Activated naive CD4-positive, alpha-beta T cell treated with anti-CD3 and anti-CD28 coated beads for 36 hours (primary cell): ENCODE measurements at regions of chr2 and their contacts with region 1.

Region 1: GRCh38 chr2:213119061-213119856 is 32.2 kb downstream of the IKZF2 start:
- DNase-seq: peak; percentile 6
- H3K4me3 Mint-ChIP-seq: no peak overlapping the region
- H3K27ac Mint-ChIP-seq: peak overlapping the region; percentile 23
- H3K4me1 Mint-ChIP-seq: peaks cover 9% of the 10 kb centered on the region
- H3K27me3 Mint-ChIP-seq: peaks cover 6% of the 10 kb centered on the region

Region 2: DNA sequence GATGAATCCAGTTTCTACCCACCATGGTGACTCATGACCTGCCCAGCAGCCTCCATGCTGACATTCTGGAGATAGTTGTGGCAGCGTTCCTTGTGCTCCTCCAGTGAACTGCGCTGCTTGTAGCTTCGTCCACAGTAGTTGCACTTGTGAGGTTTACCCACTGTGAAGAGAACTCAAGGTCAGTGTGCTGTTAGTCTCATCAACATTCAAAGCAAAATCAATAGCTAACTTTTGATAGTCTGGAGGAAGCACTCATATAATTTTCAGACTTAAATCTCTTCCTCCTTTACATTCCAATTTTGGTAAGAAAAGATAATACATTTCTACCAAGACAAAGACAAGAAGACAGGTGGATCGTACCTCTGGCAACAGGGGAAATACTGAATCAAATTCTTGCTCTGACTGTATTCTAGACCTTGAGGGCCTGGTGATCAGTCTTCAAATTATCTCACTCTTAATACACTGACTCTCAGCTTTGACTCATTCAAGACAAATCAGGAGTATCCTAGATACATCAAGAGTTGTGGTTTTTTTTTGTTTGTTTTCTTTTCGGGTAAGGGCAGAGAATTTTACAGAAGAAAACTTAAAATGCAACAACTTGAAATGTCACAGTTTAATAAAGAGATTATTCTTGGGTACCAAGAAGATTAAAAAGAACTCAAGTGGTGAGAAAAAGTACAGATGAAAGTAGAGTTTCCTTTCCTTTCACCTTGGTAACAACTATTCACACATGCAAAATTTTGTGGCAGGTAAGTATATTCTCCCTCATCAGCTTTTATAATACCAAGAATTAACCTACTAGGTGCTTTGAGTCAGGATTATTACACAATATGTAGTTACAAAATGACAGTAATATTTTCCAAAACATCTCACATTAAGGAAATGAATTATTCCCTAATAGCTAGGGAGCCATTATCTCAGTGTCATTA is 97.0 kb before region 1 on chr2:
- CTCF ChIA-PET with region 1: no interaction called
- intact Hi-C with region 1: loop called (anchors 1 kb)
- DNase-seq: peak; percentile 8
- H3K4me3 Mint-ChIP-seq: no peak overlapping the region
- H3K27ac Mint-ChIP-seq: no peak overlapping the region
- H3K4me1 Mint-ChIP-seq: peaks cover 10% of the 10 kb centered on the region
- H3K27me3 Mint-ChIP-seq: peaks cover 6% of the 10 kb centered on the region

Region 3: GRCh38 chr2:213101692-213102460 is 17.4 kb before region 1 on chr2:
- CTCF ChIA-PET with region 1: no interaction called
- intact Hi-C with region 1: loop called (anchors 1 kb)
- DNase-seq: no peak
- H3K4me3 Mint-ChIP-seq: no peak overlapping the region
- H3K27ac Mint-ChIP-seq: no peak overlapping the region
- H3K4me1 Mint-ChIP-seq: peaks cover 3% of the 10 kb centered on the region
- H3K27me3 Mint-ChIP-seq: peaks cover 8% of the 10 kb centered on the region